Mammary epithelial cell (primary cell): ENCODE measurements at regions of chr4 and their contacts with region 1.

Region 1: GRCh38 chr4:99563310-99564186 is at the start of gene TRMT10A:
- DNase-seq: peak; percentile 97
- H3K4me3 ChIP-seq: peak within 1 kb of the TSS; percentile 66 to 74 (median 67)
- H3K27ac ChIP-seq: peak within 1 kb of the TSS; percentile 95
- H3K4me1 ChIP-seq: no peaks in the 10 kb centered on the region
- H3K27me3 ChIP-seq: no peaks in the 10 kb centered on the region
- CTCF ChIP-seq: no peak
- total RNA-seq, gene TRMT10A: 4.0 to 9.1 TPM

Region 2: GRCh38 chr4:99723612-99724011 is 160.1 kb after region 1 on chr4:
- CTCF ChIA-PET with region 1: no interaction called
- dilution Hi-C with region 1: no loop called
- in situ Hi-C with region 1: no loop called
- intact Hi-C with region 1: loop called (anchors 5 kb)
- DNase-seq: peak; percentile 90
- H3K4me3 ChIP-seq: no peak overlapping the region
- H3K27ac ChIP-seq: peak overlapping the region; percentile 8
- H3K4me1 ChIP-seq: peaks cover 23% of the 10 kb centered on the region
- H3K27me3 ChIP-seq: no peaks in the 10 kb centered on the region
- CTCF ChIP-seq: no peak

Region 3: DNA sequence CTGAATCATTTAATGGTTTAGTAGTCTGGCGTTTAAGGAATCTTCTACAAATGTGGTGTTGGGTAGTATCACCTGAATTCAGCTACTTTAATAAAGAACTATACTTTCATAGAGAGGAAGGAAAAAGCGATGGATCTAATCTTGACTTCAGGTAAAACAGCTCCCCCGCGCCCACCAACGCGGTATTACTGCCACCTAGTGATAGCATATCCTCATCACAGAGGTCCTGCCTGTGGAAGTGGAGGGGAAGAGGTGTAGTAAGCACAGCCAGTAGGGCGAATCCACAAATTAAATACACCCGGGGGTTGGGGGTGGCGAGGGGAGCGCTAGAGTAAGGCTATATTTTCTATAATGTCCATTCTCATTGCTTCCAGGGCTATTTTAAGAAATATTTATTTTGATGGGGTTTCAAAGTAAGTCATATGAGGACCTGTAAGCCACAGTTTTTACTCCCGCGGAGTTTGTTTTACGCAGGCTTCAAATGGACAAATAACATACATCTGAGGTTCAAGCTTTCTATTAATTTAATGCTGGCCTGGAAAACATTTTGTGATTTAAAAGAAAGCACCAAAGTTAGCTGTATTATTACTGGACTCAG is 244.8 kb after region 1 on chr4:
- CTCF ChIA-PET with region 1: interaction called, 3 read pairs
- dilution Hi-C with region 1: no loop called
- in situ Hi-C with region 1: loop called (anchors 5 kb)
- intact Hi-C with region 1: loop called (anchors 1 kb)
- DNase-seq: peak; percentile 58
- H3K4me3 ChIP-seq: no peak overlapping the region
- H3K27ac ChIP-seq: no peak overlapping the region
- H3K4me1 ChIP-seq: no peaks in the 10 kb centered on the region
- H3K27me3 ChIP-seq: peaks cover 3% of the 10 kb centered on the region
- CTCF ChIP-seq: peak; percentile 81 to 90

Region 4: GRCh38 chr4:99885063-99885664 is 321.6 kb after region 1 on chr4:
- CTCF ChIA-PET with region 1: no interaction called
- dilution Hi-C with region 1: no loop called
- in situ Hi-C with region 1: loop called (anchors 10 kb)
- intact Hi-C with region 1: loop called (anchors 1 kb)
- DNase-seq: peak; percentile 34
- H3K4me3 ChIP-seq: no peak overlapping the region
- H3K27ac ChIP-seq: no peak overlapping the region
- H3K4me1 ChIP-seq: no peaks in the 10 kb centered on the region
- H3K27me3 ChIP-seq: no peaks in the 10 kb centered on the region
- CTCF ChIP-seq: peak; percentile 60 to 61

Region 5: GRCh38 chr4:100060765-100061416 is 497.3 kb after region 1 on chr4:
- CTCF ChIA-PET with region 1: no interaction called
- dilution Hi-C with region 1: no loop called
- in situ Hi-C with region 1: no loop called
- intact Hi-C with region 1: loop called (anchors 10 kb)
- DNase-seq: no peak
- H3K4me3 ChIP-seq: no peak overlapping the region
- H3K27ac ChIP-seq: no peak overlapping the region
- H3K4me1 ChIP-seq: no peaks in the 10 kb centered on the region
- H3K27me3 ChIP-seq: no peaks in the 10 kb centered on the region
- CTCF ChIP-seq: no peak